Sigmoid colon (tissue), 7 donors: ENCODE measurements at regions of chr15 and their contacts with region 1.

Region 1: GRCh38 chr15:101014921-101015841 is 96.0 kb downstream of the LRRK1 start:
- DNase-seq: peak; percentile 85
- H3K4me3 ChIP-seq: no peak overlapping the region
- H3K27ac ChIP-seq: no peak overlapping the region
- H3K4me1 ChIP-seq: peaks cover 0 to 5% (median 0%) of the 10 kb centered on the region in 4 donors
- H3K27me3 ChIP-seq: no peaks in the 10 kb centered on the region
- CTCF ChIP-seq: peak; percentile 62 to 83 (median 72)
- EP300 ChIP-seq: no peak
- POLR2A ChIP-seq: no peak

Region 2: GRCh38 chr15:101062471-101063171 is 47.4 kb after region 1 on chr15:
- intact Hi-C with region 1: no loop called
- DNase-seq: peak; percentile 42
- H3K4me3 ChIP-seq: no peak overlapping the region
- H3K27ac ChIP-seq: no peak overlapping the region
- H3K4me1 ChIP-seq: peaks cover 0 to 15% (median 15%) of the 10 kb centered on the region in 4 donors
- H3K27me3 ChIP-seq: no peaks in the 10 kb centered on the region
- CTCF ChIP-seq: no peak
- EP300 ChIP-seq: no peak
- POLR2A ChIP-seq: no peak

Region 3: DNA sequence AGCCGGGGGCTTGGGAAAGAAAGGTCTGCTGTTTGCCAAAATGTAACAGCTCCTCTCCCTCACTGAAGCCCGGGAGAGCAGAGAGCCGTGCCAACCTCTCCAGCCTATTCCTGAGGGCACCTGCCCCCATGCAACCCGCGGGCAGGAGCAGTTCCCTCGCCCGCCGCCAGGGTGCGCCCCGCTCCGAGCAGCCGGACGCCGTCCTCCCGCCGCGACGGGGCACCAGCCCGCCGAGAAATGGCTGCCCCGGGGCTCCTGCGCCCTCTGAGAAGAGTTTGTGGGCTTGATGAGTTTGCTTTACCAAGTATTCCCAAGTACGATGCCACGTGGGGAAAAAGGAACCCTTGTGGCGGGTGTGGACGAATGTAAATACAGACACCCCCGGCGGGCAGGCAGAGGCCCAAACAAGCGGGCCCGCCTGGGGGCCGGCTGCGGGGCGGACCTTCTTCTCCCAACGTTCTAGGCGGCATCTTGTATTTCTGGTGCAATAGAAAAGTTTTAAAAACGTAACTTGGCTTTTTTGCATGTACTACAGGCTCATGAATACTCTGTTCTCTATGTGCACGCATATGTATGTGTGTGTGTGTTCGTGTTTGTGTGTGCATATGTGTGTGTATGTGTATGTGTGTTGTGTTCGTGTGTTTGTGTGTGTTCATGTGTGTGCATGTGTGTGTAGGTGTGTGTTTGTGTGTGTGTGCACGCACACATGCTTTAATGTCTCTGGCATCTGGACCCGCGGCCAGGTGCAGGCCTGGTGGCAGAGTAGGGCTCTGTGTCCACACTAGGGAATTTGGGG is 73.8 kb after region 1 on chr15:
- intact Hi-C with region 1: loop called (anchors 5 kb)
- DNase-seq: peak; percentile 82
- H3K4me3 ChIP-seq: peak overlapping the region in 3 of 4 donors; percentile 14 to 41 (median 38)
- H3K27ac ChIP-seq: peak overlapping the region in 1 of 4 donors; percentile 11
- H3K4me1 ChIP-seq: peaks cover 0 to 23% (median 8%) of the 10 kb centered on the region in 4 donors
- H3K27me3 ChIP-seq: no peaks in the 10 kb centered on the region
- CTCF ChIP-seq: peak; percentile 86 to 99 (median 96)
- EP300 ChIP-seq: no peak
- POLR2A ChIP-seq: no peak

Region 4: GRCh38 chr15:101258238-101259144 is 243.3 kb after region 1 on chr15:
- intact Hi-C with region 1: loop called (anchors 1 kb)
- DNase-seq: peak; percentile 78
- H3K4me3 ChIP-seq: no peak overlapping the region
- H3K27ac ChIP-seq: no peak overlapping the region
- H3K4me1 ChIP-seq: no peaks in the 10 kb centered on the region
- H3K27me3 ChIP-seq: no peaks in the 10 kb centered on the region
- CTCF ChIP-seq: peak; percentile 48 to 82 (median 77)
- EP300 ChIP-seq: no peak
- POLR2A ChIP-seq: no peak